Adrenal gland (tissue), 19 donors: ENCODE measurements at regions of chrX and their contacts with region 1.

Region 1: GRCh38 chrX:151753313-151754041 is 18.9 kb downstream of the CNGA2 start:
- DNase-seq: peak; percentile 24 to 65 (median 58)
- H3K4me3 ChIP-seq: no peak overlapping the region
- H3K27ac ChIP-seq: no peak overlapping the region
- H3K4me1 ChIP-seq: no peaks in the 10 kb centered on the region
- H3K27me3 ChIP-seq: peaks cover 32% of the 10 kb centered on the region
- CTCF ChIP-seq: peak; percentile 62 to 91 (median 84)
- POLR2A ChIP-seq: no peak

Region 2: DNA sequence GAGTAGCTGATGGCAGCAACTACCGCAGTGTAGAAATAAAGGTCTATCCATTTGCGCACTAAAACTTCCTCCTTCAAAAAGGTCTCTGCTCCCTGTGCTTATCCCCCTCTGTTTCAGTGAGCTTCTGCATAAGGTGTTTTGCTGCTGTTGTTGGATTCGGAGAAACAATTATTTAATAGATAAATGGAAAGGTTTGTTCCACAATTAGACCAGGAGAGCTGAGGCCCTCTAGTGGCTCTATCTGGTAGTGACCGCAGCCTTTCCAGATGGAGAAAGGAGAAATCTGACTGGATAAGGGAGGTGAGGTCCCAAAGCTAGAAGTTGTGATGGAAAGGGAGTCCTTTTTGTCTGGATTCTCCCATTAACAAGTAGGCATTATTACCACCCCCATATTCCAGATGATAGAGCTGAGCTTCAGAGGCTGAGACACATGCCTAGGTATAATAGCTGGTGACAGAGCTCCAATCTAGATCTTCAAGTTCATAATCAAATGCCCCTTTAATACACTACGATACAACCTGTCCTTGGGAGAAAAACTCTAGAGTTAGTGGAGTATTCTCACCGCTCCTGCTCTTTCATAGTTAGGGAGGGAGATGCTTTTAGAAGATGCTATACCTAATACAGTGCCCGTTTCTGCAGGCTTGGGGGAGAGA is 879.1 kb after region 1 on chrX:
- intact Hi-C with region 1: loop called (anchors 5 to 10 kb)
- DNase-seq: peak; percentile 26 to 83 (median 61)
- H3K4me3 ChIP-seq: no peak overlapping the region
- H3K27ac ChIP-seq: no peak overlapping the region
- H3K4me1 ChIP-seq: no peaks in the 10 kb centered on the region
- H3K27me3 ChIP-seq: peaks cover 11% of the 10 kb centered on the region
- CTCF ChIP-seq: peak; percentile 62 to 85 (median 70)
- POLR2A ChIP-seq: no peak